ENCODE measurements at regions of chr2 and their contacts with region 1.

Region 1: GRCh38 chr2:240387669-240388358 is 47.6 kb upstream of the GPC1 start:
- DNase-seq: peak; percentile 90 to 96
- ATAC-seq: peak; percentile 70 to 81
- H3K4me3 ChIP-seq: peak overlapping the region; percentile 39
- H3K27ac ChIP-seq: peak overlapping the region; percentile 99 to 100
- H3K4me1 ChIP-seq: peaks cover 45% of the 10 kb centered on the region
- CTCF ChIP-seq: no peak
- EP300 ChIP-seq: peak; percentile 62 to 77; a peak in 3 of 5 replicates
- POLR2A ChIP-seq: no peak
- RAD21 ChIP-seq: peak in 1 of 2 experiments; percentile 31; a peak in 2 of 5 replicates

Region 2: GRCh38 chr2:240369801-240370585 is 17.8 kb before region 1 on chr2:
- CTCF ChIA-PET with region 1: interaction called, 15 read pairs
- POLR2A ChIA-PET with region 1: interaction called, 17 read pairs
- DNase-seq: peak; percentile 95
- ATAC-seq: peak; percentile 77 to 84
- H3K4me3 ChIP-seq: no peak overlapping the region
- H3K27ac ChIP-seq: peak overlapping the region; percentile 92 to 97
- H3K4me1 ChIP-seq: peaks cover 68% of the 10 kb centered on the region
- CTCF ChIP-seq: peak; percentile 12; the same call in 1 of the 3 replicates
- EP300 ChIP-seq: peak; percentile 43 to 69; a peak in 2 of 5 replicates
- POLR2A ChIP-seq: peak; percentile 8; the same call in 1 of the 2 replicates
- RAD21 ChIP-seq: peak in 1 of 2 experiments; percentile 40; a peak in 2 of 5 replicates